BJ (cell line): ENCODE measurements at regions of chr7 and their contacts with region 1.

Region 1: DNA sequence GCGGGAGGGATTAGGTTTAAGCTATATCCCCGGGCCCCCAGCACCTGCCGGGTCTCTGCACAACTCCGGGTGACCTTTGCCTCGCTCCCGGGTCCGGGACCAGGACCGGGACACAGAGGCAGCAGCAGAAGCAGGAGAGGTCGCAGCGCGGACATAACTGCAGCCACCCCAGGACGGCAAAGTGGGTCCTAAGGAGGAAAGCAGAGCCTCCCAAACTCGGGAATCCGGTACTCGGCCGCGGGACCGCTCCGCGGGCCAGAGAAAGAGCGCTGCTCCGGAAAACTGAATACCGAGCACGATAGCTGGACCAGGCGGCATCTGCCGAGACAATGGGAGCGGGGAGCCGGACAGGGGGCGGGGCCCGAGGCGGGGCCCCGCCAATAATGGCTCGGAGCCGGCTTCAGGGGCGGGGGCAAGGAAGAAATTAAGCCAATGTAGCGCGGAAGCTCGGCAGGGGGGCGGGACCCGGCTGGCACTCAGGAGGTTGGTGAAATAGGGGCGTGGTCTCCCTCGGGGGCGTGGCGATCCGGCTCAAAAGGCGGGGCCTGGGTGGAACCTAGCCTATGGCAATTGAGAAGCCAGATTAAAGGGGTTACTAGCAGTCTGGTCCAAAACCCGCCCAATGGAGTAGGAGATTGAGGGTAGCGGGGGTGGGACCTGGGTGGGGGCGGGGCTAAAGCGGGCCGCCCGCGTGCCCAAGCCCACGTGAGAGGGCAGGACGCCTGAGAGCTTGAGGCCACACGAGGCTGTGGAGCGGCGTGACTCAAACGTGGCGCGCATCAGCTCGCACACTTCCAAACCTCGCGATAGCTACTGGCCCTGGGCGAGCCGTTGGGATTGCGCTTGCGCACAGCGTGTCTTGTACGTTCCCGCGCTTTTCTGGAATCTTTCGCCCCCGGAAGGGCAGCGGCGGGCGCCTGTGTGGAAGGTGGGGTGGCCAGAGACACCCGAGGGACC is at the starts of genes GPC2 and STAG3:
- DNase-seq: peak; percentile 75
- H3K4me3 ChIP-seq: peak within 1 kb of the TSS; percentile 49
- H3K27me3 ChIP-seq: no peaks in the 10 kb centered on the region
- CTCF ChIP-seq: no peak
- polyA plus RNA-seq, gene GPC2: 1.3 and 1.9 TPM in 2 replicates
- polyA plus RNA-seq, gene STAG3: 0.44 and 0.61 TPM in 2 replicates

Region 2: DNA sequence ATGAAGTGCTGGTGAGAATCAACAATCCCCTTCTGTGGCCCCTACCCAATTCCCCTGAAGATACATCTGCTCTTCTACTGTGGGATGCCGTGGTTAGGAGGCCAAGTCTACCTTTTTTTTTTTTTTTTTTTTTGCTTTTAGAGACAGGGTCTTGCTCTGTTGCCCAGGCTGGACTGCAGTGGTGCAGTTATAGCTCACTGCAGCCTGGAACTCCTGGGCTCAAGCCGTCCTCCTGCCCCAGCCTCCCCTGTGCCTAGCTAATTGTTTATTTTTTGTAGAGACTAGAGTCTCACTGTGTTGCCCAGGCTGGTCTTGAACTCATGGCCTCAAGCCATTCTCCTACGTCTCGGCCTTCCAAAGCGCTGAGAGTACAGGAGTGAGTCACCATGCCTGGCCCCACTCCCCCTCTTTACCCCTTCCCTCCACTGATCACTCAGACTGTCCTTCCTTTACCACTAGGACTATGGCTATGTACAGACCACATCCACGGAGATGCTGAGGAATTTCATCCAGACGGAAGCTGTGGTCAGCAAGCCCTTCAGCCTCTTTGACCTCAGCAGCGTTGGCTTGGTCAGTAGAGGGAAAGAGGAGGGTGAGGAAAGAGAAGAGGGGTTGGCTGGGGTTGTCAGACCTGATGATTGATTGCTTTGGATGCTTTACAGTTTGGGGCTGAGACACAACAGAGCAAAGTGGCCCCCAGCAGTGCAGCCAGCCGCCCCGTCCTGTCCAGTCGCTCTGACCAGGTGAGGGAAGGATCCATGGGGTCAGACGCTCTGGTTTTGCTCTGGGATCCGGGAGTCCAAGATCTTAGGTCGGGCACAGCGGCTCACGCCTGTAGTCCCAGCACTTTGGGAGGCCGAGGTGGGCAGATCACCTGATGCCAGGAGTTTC is 74.1 kb before region 1 on chr7:
- CTCF ChIA-PET with region 1: no interaction called
- POLR2A ChIA-PET with region 1: no interaction called
- DNase-seq: peak; percentile 42
- H3K4me3 ChIP-seq: no peak overlapping the region
- H3K27me3 ChIP-seq: no peaks in the 10 kb centered on the region
- CTCF ChIP-seq: no peak

Region 3: DNA sequence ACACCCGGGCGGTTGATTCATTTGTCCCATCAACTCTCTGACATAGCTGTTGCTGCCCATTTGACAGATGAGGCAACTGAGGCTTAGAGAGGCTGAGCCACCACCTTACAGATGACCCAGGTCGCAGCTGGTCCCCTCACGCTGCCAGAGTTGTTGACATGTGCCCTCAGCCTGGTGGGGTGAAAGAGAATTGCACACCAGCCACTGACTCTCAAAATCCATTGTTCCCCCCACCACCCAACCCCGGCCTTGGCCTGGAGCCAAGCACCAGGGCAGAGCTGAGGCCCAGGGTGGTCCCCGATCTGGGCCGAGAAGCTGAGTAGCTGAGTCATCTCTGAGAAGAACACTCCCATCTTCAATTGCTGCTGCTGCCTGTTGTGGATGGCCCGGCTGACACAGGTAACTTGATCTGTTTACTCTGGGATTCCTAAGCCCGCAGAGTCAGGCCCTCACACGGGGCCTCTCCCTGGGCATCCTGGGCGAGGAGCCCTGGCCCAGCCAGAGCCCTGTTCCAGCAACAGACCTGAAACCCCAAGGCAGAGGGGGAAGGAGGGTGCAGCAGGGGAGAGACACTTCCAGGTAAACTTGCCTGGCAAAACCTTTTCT is 69.9 kb after region 1 on chr7:
- CTCF ChIA-PET with region 1: no interaction called
- POLR2A ChIA-PET with region 1: interaction called, 15 read pairs
- DNase-seq: no peak
- H3K4me3 ChIP-seq: no peak overlapping the region
- H3K27me3 ChIP-seq: no peaks in the 10 kb centered on the region
- CTCF ChIP-seq: no peak

Region 4: DNA sequence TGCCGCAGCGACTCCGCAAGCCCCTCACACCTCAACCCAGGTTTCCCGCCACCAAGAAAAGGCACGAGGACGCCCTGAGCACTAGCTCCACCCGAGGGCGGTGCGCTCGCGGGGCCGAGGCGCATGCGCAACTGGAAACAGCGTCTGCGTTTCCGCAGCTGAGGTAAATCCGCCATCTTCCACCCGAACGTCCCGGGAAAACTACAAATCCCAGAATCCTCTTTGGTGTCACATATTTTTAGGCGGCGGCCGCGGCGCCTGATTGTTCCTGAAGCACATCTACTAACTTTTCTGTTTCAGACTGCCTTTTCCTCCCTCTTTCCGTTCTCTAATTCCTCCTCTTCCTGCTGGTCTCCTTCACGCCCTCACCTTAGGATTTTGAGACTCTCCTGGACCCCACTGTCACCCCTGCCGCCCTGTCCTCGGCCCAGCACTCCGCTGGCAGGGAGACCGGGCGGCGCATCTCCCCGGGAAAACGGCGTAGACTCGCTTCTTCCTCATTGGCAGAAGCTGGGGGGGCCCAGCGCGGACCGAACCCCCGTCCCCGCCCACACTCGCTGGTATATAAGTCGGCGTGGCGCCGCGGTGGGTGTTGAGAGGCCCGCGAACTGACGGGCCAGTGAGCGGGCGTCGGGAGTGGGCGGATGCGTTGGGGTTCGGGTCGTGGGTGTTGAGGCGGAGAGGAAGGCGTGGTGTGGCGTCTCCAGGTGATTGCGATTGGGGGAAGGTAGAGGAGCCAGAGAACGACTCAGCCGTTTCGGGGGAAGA is 251.1 kb after region 1 on chr7 and contains the start of gene ZCWPW1:
- CTCF ChIA-PET with region 1: no interaction called
- POLR2A ChIA-PET with region 1: interaction called, 13 read pairs
- DNase-seq: peak; percentile 81
- H3K4me3 ChIP-seq: peak within 1 kb of the TSS; percentile 84
- H3K27me3 ChIP-seq: no peaks in the 10 kb centered on the region
- CTCF ChIP-seq: 0 out of 2 replicates have a peak, but pooled peaks have one; percentile 10
- polyA plus RNA-seq, gene ZCWPW1: 2.2 and 2.8 TPM in 2 replicates